Activated CD8-positive, alpha-beta T cell treated with anti-CD3 and anti-CD28 coated beads for 36 hours (primary cell): ENCODE measurements at regions of chr11 and their contacts with region 1.

Region 1: DNA sequence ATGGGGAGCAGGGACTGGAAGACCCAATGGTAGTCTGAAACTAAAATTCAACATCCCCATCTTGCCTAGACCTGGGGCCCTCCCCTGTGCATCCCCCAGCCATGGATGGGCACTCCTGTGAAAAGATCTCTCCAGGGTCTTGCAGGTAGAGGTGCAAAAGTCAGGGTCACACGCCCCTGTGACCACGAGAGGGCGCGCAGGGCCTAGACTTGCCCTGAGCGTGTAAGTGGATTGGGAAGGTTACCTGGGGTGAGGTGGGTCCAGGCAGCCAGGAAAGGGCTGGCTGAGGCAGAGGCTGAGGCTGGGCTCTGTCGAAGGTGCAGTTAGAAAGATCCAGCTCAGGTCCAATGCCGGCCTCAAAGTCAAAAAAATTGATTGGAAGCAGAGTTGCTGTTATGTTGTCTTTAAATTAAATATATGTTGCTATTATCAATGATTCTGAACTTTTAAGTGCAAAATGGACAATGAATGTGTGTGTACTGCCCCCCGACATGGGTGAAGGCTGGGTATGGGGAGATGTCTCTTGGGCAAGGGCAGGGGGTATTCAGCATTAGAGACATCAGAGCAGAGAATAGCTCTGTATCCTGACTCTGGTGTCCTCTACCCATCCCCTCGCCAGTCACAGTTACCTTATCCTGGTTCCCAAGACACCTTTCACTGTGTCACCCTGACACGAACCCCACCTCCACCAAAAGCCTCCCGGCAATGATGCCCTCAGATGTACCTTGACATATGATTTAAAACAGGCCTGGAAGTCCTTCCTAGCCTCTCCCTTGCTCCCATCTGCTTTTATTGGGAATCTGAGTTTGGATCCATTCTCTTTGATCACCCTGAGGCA is 4.7 kb upstream of the POU2F3 start:
- DNase-seq: peak; percentile 85
- ATAC-seq: peak; percentile 86
- H3K4me3 Mint-ChIP-seq: no peak overlapping the region
- H3K27ac Mint-ChIP-seq: no peak overlapping the region
- H3K4me1 Mint-ChIP-seq: no peaks in the 10 kb centered on the region
- H3K27me3 Mint-ChIP-seq: peaks cover 30% of the 10 kb centered on the region
- CTCF ChIP-seq: peak; percentile 83

Region 2: DNA sequence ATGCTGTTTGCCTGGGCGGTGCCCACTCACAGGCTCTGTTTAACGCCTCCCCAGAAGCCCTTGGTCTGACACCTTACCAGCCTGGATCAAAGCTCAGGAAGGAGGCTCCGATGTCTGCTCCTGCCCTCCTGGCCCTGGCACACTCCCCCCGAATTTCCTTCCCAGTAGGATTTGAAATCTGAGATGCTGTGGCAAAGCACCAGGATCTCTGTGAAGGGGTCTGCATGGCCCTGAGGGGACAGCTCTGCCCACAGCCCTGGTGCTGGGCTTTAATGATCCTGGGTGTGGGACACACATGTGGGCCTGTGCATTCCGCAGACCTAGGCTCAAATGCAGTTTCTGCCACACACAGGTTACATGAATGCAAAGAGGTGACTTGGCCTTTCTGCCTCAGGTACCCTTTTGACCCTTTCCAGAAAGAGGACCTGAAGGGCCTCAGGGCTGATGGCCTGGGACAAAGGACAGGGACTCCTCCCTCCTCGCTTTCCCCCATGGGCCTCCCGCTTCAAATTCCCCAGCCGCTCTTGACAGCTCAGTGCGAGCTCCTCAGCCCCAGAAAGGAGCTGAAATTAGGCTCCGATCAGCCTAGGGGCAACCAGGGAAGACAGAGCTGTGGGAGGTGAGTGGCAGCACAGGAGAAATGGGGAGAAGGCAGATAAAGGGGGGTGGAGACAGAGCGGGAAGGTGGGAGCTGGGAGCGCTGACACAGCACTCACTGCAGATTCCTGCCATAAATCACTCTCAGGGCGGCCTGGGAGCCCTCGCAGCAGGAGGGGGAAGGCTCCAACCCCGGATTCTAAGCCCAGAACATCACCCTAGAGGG is 138.7 kb before region 1 on chr11:
- CTCF ChIA-PET with region 1: no interaction called
- POLR2A ChIA-PET with region 1: no interaction called
- intact Hi-C with region 1: no loop called
- DNase-seq: no peak
- ATAC-seq: no peak
- H3K4me3 Mint-ChIP-seq: no peak overlapping the region
- H3K27ac Mint-ChIP-seq: no peak overlapping the region
- H3K4me1 Mint-ChIP-seq: no peaks in the 10 kb centered on the region
- H3K27me3 Mint-ChIP-seq: peaks cover 8% of the 10 kb centered on the region
- CTCF ChIP-seq: no peak

Region 3: DNA sequence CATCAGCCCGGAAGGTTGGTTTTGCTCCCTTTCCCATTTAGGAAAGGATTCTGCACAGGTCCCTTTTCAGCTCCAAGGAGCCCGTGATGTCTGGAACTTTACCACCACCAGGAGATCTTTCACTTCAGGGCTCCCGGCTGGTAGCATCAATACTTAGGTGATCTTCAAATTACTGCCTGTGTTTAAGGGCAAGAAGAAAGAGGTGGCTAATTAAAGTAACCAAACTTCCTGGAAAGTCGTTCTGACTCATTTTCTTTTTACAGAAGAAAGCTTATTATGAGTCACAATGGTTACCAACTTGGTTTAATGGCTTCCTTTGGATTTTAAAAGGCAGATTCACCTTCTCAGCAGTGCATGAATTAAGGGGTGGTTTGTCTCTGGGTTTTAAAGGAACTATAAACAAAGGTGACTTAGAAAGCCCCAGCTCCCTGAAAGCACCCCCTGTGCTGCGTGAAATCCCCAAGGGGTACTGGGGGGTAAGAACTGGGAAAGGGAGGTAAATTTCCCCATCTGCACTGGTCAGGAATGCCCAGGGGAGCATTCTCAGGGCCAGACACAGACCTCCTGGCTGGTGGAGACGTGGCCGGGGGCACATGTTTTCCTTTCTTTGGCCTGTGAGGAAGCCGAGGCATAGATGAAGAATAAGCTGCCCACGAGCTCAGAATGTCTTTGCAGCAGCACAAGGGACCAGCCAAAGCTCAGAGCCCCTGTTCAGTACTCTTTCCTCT is 13.5 kb after region 1 on chr11:
- CTCF ChIA-PET with region 1: interaction called, 112 read pairs
- POLR2A ChIA-PET with region 1: interaction called, 4 read pairs
- intact Hi-C with region 1: no loop called
- DNase-seq: peak; percentile 18
- ATAC-seq: peak; percentile 82
- H3K4me3 Mint-ChIP-seq: peak overlapping the region; percentile 30
- H3K27ac Mint-ChIP-seq: peak overlapping the region; percentile 75
- H3K4me1 Mint-ChIP-seq: peaks cover 45% of the 10 kb centered on the region
- H3K27me3 Mint-ChIP-seq: peaks cover 56% of the 10 kb centered on the region
- CTCF ChIP-seq: no peak